Heart left ventricle (tissue), 16 donors: ENCODE measurements at regions of chr12 and their contacts with region 1.

Region 1: GRCh38 chr12:51424662-51425438 is at the start of gene SLC4A8:
- DNase-seq: peak; percentile 84 to 90 (median 86)
- ATAC-seq: peak; percentile 81 to 96 (median 94)
- H3K4me3 ChIP-seq: peak within 1 kb of the TSS; percentile 6 to 72 (median 62)
- H3K27ac ChIP-seq: no peak within 1 kb of the TSS
- H3K4me1 ChIP-seq: peaks cover 0 to 12% (median 9%) of the 10 kb centered on the region in 12 donors
- H3K27me3 ChIP-seq: peaks cover 0 to 17% (median 0%) of the 10 kb centered on the region in 9 donors
- CTCF ChIP-seq: peak; percentile 51 to 85 (median 74)
- POLR2A ChIP-seq: no peak
- total RNA-seq, gene SLC4A8: 0.13 to 3.6 (median 0.56) TPM

Region 2: GRCh38 chr12:50820177-50820576 is 604.7 kb before region 1 on chr12:
- intact Hi-C with region 1: no loop called
- DNase-seq: no peak
- ATAC-seq: no peak
- H3K4me3 ChIP-seq: no peak overlapping the region
- H3K27ac ChIP-seq: no peak overlapping the region
- H3K4me1 ChIP-seq: peaks cover 0 to 4% (median 0%) of the 10 kb centered on the region in 12 donors
- H3K27me3 ChIP-seq: no peaks in the 10 kb centered on the region
- CTCF ChIP-seq: no peak
- POLR2A ChIP-seq: no peak

Region 3: GRCh38 chr12:51531978-51532497 is 107.2 kb after region 1 on chr12:
- intact Hi-C with region 1: loop called (anchors 1 to 5 kb)
- DNase-seq: peak in 4 of 5 donors; percentile 55 to 68 (median 64)
- ATAC-seq: peak; percentile 61 to 93 (median 86)
- H3K4me3 ChIP-seq: no peak overlapping the region
- H3K27ac ChIP-seq: no peak overlapping the region
- H3K4me1 ChIP-seq: peaks cover 0 to 3% (median 0%) of the 10 kb centered on the region in 12 donors
- H3K27me3 ChIP-seq: peaks cover 0 to 34% (median 14%) of the 10 kb centered on the region in 9 donors
- CTCF ChIP-seq: peak; percentile 77 to 89 (median 84)
- POLR2A ChIP-seq: no peak

Region 4: GRCh38 chr12:51814311-51815088 is 389.6 kb after region 1 on chr12:
- intact Hi-C with region 1: loop called in 2 of 10 experiments (anchors 5 kb)
- DNase-seq: peak; percentile 77 to 91 (median 85)
- ATAC-seq: peak; percentile 70 to 90 (median 88)
- H3K4me3 ChIP-seq: peak overlapping the region; percentile 44 to 83 (median 65)
- H3K27ac ChIP-seq: peak overlapping the region; percentile 80 to 94 (median 86)
- H3K4me1 ChIP-seq: peaks cover 0 to 19% (median 8%) of the 10 kb centered on the region in 12 donors
- H3K27me3 ChIP-seq: peaks cover 0 to 10% (median 2%) of the 10 kb centered on the region in 9 donors
- CTCF ChIP-seq: peak; percentile 27 to 85 (median 62)
- POLR2A ChIP-seq: peak in 1 of 2 donors; percentile 42

Region 5: GRCh38 chr12:51823875-51824565 is 399.2 kb after region 1 on chr12:
- intact Hi-C with region 1: loop called in 9 of 10 experiments (anchors 2 to 5 kb)
- DNase-seq: no peak
- ATAC-seq: peak; percentile 38 to 55 (median 44)
- H3K4me3 ChIP-seq: no peak overlapping the region
- H3K27ac ChIP-seq: no peak overlapping the region
- H3K4me1 ChIP-seq: peaks cover 0 to 35% (median 5%) of the 10 kb centered on the region in 12 donors
- H3K27me3 ChIP-seq: peaks cover 0 to 22% (median 5%) of the 10 kb centered on the region in 9 donors
- CTCF ChIP-seq: peak; percentile 23 to 62 (median 48)
- POLR2A ChIP-seq: no peak

Region 6: DNA sequence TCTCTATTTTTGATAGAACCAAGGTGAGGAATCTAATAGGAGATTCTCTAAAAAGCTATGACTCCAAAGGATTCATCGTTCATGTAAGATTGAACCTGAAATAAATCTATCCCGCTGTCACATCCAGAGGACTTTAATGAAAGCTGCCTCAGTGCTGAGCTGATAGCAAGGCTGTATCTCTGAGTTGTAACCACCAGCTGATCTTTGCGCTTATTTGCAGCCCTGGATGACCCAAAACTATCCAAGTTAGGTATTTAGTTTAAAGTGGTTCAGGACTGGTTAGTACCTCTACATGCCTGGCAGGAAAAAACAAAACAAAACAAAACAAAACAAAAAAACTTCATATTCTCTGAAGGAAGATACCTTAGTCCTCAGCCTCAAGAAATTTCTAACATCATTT is 454.3 kb after region 1 on chr12:
- intact Hi-C with region 1: loop called in 9 of 10 experiments (anchors 2 to 10 kb)
- DNase-seq: no peak
- ATAC-seq: no peak
- H3K4me3 ChIP-seq: no peak overlapping the region
- H3K27ac ChIP-seq: no peak overlapping the region
- H3K4me1 ChIP-seq: no peaks in the 10 kb centered on the region
- H3K27me3 ChIP-seq: no peaks in the 10 kb centered on the region
- CTCF ChIP-seq: no peak
- POLR2A ChIP-seq: no peak

Region 7: GRCh38 chr12:51980051-51980808 is 555.4 kb after region 1 on chr12:
- intact Hi-C with region 1: loop called in 2 of 10 experiments (anchors 10 kb)
- DNase-seq: peak; percentile 56 to 76 (median 70)
- ATAC-seq: peak; percentile 74 to 92 (median 90)
- H3K4me3 ChIP-seq: no peak overlapping the region
- H3K27ac ChIP-seq: no peak overlapping the region
- H3K4me1 ChIP-seq: peaks cover 0 to 38% (median 0%) of the 10 kb centered on the region in 12 donors
- H3K27me3 ChIP-seq: no peaks in the 10 kb centered on the region
- CTCF ChIP-seq: peak; percentile 91 to 99 (median 98)
- POLR2A ChIP-seq: no peak